Endothelial cell of umbilical vein (primary cell): ENCODE measurements at regions of chr10 and their contacts with region 1.

Region 1: GRCh38 chr10:99435986-99436638 is 5.7 kb upstream of the GOT1 start:
- DNase-seq: peak; percentile 64
- H3K4me3 ChIP-seq: no peak overlapping the region
- H3K27ac ChIP-seq: no peak overlapping the region
- H3K4me1 ChIP-seq: peaks cover 7% of the 10 kb centered on the region
- H3K27me3 ChIP-seq: no peaks in the 10 kb centered on the region
- CTCF ChIP-seq: peak; percentile 21 to 23
- POLR2A ChIP-seq: no peak

Region 2: GRCh38 chr10:99008054-99008453 is 428.1 kb before region 1 on chr10:
- CTCF ChIA-PET with region 1: no interaction called
- POLR2A ChIA-PET with region 1: no interaction called
- dilution Hi-C with region 1: no loop called
- intact Hi-C with region 1: no loop called
- DNase-seq: no peak
- H3K4me3 ChIP-seq: no peak overlapping the region
- H3K27ac ChIP-seq: no peak overlapping the region
- H3K4me1 ChIP-seq: no peaks in the 10 kb centered on the region
- H3K27me3 ChIP-seq: no peaks in the 10 kb centered on the region
- CTCF ChIP-seq: no peak
- POLR2A ChIP-seq: no peak

Region 3: GRCh38 chr10:99467236-99467999 is 31.3 kb after region 1 on chr10:
- CTCF ChIA-PET with region 1: interaction called, 33 read pairs
- POLR2A ChIA-PET with region 1: no interaction called
- dilution Hi-C with region 1: no loop called
- intact Hi-C with region 1: no loop called
- DNase-seq: peak; percentile 97
- H3K4me3 ChIP-seq: peak overlapping the region in 1 of 3 experiments; percentile 11
- H3K27ac ChIP-seq: peak overlapping the region; percentile 95
- H3K4me1 ChIP-seq: peaks cover 35% of the 10 kb centered on the region
- H3K27me3 ChIP-seq: no peaks in the 10 kb centered on the region
- CTCF ChIP-seq: no peak
- POLR2A ChIP-seq: no peak

Region 4: DNA sequence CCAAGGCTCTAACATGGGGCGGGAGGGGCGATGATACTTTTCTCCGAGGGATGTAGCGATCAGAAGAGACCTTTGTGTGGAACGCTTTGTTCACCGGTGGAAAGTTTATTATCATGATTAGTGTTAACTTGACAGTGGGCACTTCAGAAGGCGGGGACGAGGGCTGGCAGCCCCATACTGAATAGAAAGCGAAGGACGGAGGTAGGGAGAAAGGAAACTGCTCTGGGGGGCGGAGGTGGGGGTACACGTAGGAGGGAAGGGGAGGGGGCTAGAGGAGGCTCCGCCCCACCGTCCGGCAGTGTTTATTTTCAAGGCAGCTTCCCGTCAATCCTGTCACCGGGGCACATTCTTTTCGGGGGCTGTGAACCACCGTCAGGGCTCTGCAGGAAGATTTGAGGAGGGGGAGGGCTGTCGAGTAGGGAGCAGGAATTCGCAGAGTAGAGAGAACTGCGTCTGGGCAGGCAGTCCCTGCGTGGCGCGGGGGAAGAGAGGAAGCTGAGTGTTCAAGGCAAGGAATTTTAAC is 87.2 kb after region 1 on chr10:
- CTCF ChIA-PET with region 1: interaction called, 14 read pairs
- POLR2A ChIA-PET with region 1: no interaction called
- dilution Hi-C with region 1: no loop called
- intact Hi-C with region 1: loop called (anchors 5 kb)
- DNase-seq: no peak
- H3K4me3 ChIP-seq: peak overlapping the region in 1 of 3 experiments; percentile 14
- H3K27ac ChIP-seq: no peak overlapping the region
- H3K4me1 ChIP-seq: no peaks in the 10 kb centered on the region
- H3K27me3 ChIP-seq: peaks cover 93 to 98% of the 10 kb centered on the region in 2 experiments
- CTCF ChIP-seq: no peak
- POLR2A ChIP-seq: no peak

Region 5: DNA sequence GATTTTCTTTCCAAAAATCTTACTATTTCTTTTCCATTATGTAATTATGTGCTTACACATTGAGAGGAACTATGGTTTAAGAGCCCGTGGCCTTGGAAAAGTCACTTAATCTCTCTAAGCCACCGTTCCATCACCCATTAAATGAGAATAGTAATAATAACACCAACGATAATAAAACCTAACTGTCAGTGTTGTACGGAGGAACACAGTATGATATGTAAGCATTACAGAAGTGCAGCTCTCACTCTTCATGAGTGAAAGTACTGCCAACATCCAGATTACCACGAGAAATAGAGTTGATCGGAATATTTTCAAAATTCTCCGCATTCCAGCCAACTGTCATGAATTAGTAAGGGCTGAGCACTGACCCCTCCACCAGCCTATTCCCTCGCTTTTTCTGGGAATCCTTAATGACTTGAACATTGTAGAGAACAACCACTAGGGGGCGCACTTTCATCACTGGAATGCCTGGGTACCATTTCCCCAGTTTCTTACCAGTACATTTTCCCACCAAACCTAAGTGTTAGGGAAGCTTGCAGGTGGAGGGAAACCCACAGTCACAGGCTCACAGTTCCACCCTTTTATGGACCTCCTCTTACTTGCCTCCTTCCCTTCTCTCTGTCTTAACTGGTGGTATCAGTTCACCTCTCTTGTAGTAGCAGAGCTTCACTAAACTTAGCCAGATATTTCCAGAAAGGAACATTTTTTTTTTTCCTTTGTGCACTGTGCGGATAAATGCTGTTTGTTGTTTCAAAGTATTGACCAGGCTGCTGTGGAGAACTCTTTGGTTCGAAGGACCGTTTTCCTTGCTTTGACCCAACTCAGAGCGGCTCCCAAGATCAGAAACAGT is 124.4 kb after region 1 on chr10:
- CTCF ChIA-PET with region 1: interaction called, 153 read pairs
- POLR2A ChIA-PET with region 1: no interaction called
- dilution Hi-C with region 1: no loop called
- intact Hi-C with region 1: no loop called
- DNase-seq: peak; percentile 41
- H3K4me3 ChIP-seq: no peak overlapping the region
- H3K27ac ChIP-seq: no peak overlapping the region
- H3K4me1 ChIP-seq: no peaks in the 10 kb centered on the region
- H3K27me3 ChIP-seq: peaks cover 3 to 19% of the 10 kb centered on the region in 2 experiments
- CTCF ChIP-seq: peak; percentile 62
- POLR2A ChIP-seq: no peak

Region 6: GRCh38 chr10:99583687-99584086 is 147.6 kb after region 1 on chr10:
- CTCF ChIA-PET with region 1: no interaction called
- POLR2A ChIA-PET with region 1: no interaction called
- dilution Hi-C with region 1: no loop called
- intact Hi-C with region 1: no loop called
- DNase-seq: no peak
- H3K4me3 ChIP-seq: no peak overlapping the region
- H3K27ac ChIP-seq: no peak overlapping the region
- H3K4me1 ChIP-seq: no peaks in the 10 kb centered on the region
- H3K27me3 ChIP-seq: peaks cover 5 to 14% of the 10 kb centered on the region in 2 experiments
- CTCF ChIP-seq: no peak
- POLR2A ChIP-seq: no peak

Region 7: GRCh38 chr10:99620713-99621453 is 184.8 kb after region 1 on chr10:
- CTCF ChIA-PET with region 1: interaction called, 233 read pairs
- POLR2A ChIA-PET with region 1: no interaction called
- dilution Hi-C with region 1: loop called (anchors 25 kb)
- intact Hi-C with region 1: no loop called
- DNase-seq: peak; percentile 94
- H3K4me3 ChIP-seq: peak overlapping the region; percentile 24 to 57 (median 44)
- H3K27ac ChIP-seq: peak overlapping the region; percentile 93
- H3K4me1 ChIP-seq: peaks cover 21% of the 10 kb centered on the region
- H3K27me3 ChIP-seq: no peaks in the 10 kb centered on the region
- CTCF ChIP-seq: no peak
- POLR2A ChIP-seq: no peak